Lower lobe of right lung (tissue), 2 donors: ENCODE measurements at regions of chr15 and their contacts with region 1.

Region 1: DNA sequence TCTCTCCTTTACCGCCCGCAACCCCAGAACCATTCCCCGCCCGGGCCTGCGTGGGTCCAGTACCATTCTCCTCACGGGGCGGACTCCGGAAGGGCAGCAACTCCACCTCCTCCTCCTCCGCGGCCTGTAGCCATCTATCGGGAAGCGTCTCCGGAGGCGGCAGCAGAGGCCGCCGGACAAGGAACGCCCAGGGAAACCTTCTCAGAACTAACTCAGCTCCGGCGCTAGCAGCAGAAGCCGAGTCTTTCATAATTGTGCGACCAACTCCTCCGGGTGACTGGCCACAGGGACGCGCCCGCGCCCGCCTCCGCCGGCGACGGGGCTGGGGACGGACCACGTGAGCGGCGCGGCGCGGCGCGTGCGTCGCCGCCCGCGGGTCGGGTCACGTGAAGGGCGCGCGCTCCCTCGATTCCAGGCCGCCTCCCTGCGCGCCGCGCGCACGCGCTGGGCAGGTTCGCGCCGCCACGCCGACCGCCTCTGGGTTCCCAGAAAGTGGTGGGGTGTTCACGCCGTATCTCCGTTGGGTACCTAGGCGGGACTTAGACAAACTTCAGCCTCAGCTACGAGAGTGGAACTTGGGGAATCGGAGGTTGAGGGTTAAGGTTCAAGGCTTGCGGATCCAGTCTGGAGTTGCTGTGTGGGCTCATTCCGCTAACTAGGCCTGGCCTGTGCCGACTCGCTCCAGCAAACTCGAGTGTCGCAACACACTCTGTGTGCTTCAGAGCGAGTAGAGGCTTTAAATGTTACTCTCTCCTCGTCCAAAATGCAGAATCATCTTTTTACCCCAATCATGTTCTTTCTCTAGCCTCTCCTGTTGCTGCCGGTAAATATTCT is at the start of gene TRPM7:
- DNase-seq: peak; percentile 94
- ATAC-seq: peak; percentile 98
- H3K4me3 ChIP-seq: peak within 1 kb of the TSS; percentile 91
- H3K27ac ChIP-seq: peak within 1 kb of the TSS; percentile 93
- H3K4me1 ChIP-seq: peaks cover 35% of the 10 kb centered on the region
- H3K27me3 ChIP-seq: no peaks in the 10 kb centered on the region
- CTCF ChIP-seq: no peak
- total RNA-seq, gene TRPM7: 47.3 TPM

Region 2: GRCh38 chr15:50210291-50211062 is 476.2 kb before region 1 on chr15:
- intact Hi-C with region 1: no loop called
- DNase-seq: no peak
- ATAC-seq: no peak
- H3K4me3 ChIP-seq: no peak overlapping the region
- H3K27ac ChIP-seq: no peak overlapping the region
- H3K4me1 ChIP-seq: no peaks in the 10 kb centered on the region
- H3K27me3 ChIP-seq: no peaks in the 10 kb centered on the region
- CTCF ChIP-seq: no peak

Region 3: DNA sequence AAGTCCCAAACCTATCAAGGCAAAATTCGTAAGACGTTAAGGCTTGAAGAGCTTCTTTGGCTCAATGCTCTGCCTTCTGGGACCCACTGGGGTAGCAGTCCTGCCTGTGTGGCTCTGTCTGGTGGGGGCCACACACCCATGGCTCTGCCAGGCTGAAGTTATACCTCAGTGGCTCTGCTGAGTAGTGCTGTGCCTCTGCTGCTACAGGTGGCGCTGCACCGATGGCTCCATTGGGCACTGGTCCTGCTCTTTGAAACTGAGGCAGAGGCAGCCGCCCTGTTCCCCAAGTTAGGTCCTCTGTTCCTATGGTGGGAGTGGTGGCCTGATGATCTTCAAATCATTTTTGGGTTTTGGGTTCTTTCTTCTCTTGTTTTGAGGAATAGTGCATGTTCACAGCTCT is 153.8 kb after region 1 on chr15:
- intact Hi-C with region 1: no loop called
- DNase-seq: no peak
- ATAC-seq: no peak
- H3K4me3 ChIP-seq: no peak overlapping the region
- H3K27ac ChIP-seq: no peak overlapping the region
- H3K4me1 ChIP-seq: no peaks in the 10 kb centered on the region
- H3K27me3 ChIP-seq: no peaks in the 10 kb centered on the region
- CTCF ChIP-seq: no peak

Region 4: DNA sequence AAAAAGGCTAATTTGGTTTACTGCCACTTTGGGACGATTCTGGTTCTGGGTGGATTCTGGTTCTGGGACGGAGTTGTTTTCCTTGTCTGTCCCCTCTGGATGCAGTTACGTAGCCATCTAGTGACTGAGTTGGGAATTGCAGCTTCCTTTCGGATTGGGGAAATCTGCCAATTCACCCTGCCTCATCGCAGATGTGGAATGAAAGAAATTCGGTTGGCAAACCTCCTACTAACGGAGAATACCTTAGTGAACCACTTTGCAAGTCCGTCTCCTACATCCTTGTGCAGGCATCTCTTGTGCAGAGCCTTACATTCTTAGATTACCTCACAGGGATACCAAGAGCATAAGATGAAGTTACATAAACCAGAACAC is 190.3 kb after region 1 on chr15:
- intact Hi-C with region 1: loop called (anchors 10 kb)
- DNase-seq: no peak
- ATAC-seq: peak; percentile 83 to 86
- H3K4me3 ChIP-seq: peak overlapping the region; percentile 50
- H3K27ac ChIP-seq: no peak overlapping the region
- H3K4me1 ChIP-seq: peaks cover 9% of the 10 kb centered on the region
- H3K27me3 ChIP-seq: no peaks in the 10 kb centered on the region
- CTCF ChIP-seq: peak; percentile 95